ENCODE measurements at regions of chr22 and their contacts with region 1.

Region 1: GRCh38 chr22:29394931-29395581 is 6.7 kb upstream of the AP1B1 start:
- DNase-seq: peak; percentile 43 to 70 (median 64)
- ATAC-seq: peak; percentile 98
- H3K4me3 ChIP-seq: no peak overlapping the region
- H3K4me3 Mint-ChIP-seq: peak overlapping the region in 1 of 10 donors; percentile 23
- H3K27ac ChIP-seq: no peak overlapping the region
- H3K27ac Mint-ChIP-seq: peak overlapping the region in 2 of 9 donors; percentile 38 to 52
- H3K4me1 ChIP-seq: no peaks in the 10 kb centered on the region
- H3K4me1 Mint-ChIP-seq: peaks cover 7 to 19% (median 8%) of the 10 kb centered on the region in 7 donors
- H3K27me3 ChIP-seq: no peaks in the 10 kb centered on the region
- H3K27me3 Mint-ChIP-seq: no peaks in the 10 kb centered on the region

Region 2: DNA sequence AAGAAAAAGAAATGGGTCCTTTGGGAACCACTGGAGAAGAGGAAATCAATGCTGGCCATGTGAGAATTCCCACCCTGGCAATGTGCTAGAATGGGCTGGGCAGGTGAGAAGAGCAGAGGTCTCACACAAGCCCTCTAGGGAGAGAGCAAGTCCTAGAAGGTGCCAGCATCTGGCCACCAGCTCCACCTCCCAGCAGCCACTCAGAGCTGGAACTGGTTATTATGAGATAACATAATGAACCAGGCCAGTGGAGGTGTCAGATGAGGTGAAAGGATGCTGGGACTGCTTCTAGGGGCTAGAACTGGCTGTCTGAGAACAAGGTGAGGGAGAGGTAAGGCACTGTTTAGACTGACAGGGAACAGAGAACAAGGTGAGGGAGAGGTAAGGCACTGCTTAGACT is 114.2 kb after region 1 on chr22:
- CTCF ChIA-PET with region 1: no interaction called
- POLR2A ChIA-PET with region 1: no interaction called
- intact Hi-C with region 1: loop called in 1 of 2 experiments (anchors 5 kb)
- DNase-seq: no peak
- ATAC-seq: no peak
- H3K4me3 ChIP-seq: no peak overlapping the region
- H3K4me3 Mint-ChIP-seq: no peak overlapping the region
- H3K27ac ChIP-seq: no peak overlapping the region
- H3K27ac Mint-ChIP-seq: peak overlapping the region in 2 of 9 donors; percentile 66 to 84
- H3K4me1 ChIP-seq: no peaks in the 10 kb centered on the region
- H3K4me1 Mint-ChIP-seq: peaks cover 0 to 13% (median 0%) of the 10 kb centered on the region in 7 donors
- H3K27me3 ChIP-seq: no peaks in the 10 kb centered on the region
- H3K27me3 Mint-ChIP-seq: no peaks in the 10 kb centered on the region

Region 3: GRCh38 chr22:29524440-29525191 is 129.6 kb after region 1 on chr22:
- CTCF ChIA-PET with region 1: interaction called, 12 read pairs
- POLR2A ChIA-PET with region 1: no interaction called
- intact Hi-C with region 1: loop called (anchors 1 kb)
- DNase-seq: peak in 6 of 9 donors; percentile 2 to 25 (median 12)
- ATAC-seq: peak; percentile 64
- H3K4me3 ChIP-seq: no peak overlapping the region
- H3K4me3 Mint-ChIP-seq: no peak overlapping the region
- H3K27ac ChIP-seq: no peak overlapping the region
- H3K27ac Mint-ChIP-seq: peak overlapping the region in 1 of 9 donors; percentile 77
- H3K4me1 ChIP-seq: no peaks in the 10 kb centered on the region
- H3K4me1 Mint-ChIP-seq: no peaks in the 10 kb centered on the region
- H3K27me3 ChIP-seq: no peaks in the 10 kb centered on the region
- H3K27me3 Mint-ChIP-seq: no peaks in the 10 kb centered on the region

Region 4: GRCh38 chr22:29580200-29580810 is 185.2 kb after region 1 on chr22:
- CTCF ChIA-PET with region 1: no interaction called
- POLR2A ChIA-PET with region 1: no interaction called
- intact Hi-C with region 1: loop called (anchors 1 to 5 kb)
- DNase-seq: peak in 1 of 9 donors; percentile 26
- ATAC-seq: no peak
- H3K4me3 ChIP-seq: peak overlapping the region; percentile 75
- H3K4me3 Mint-ChIP-seq: peak overlapping the region; percentile 88 to 96 (median 93)
- H3K27ac ChIP-seq: peak overlapping the region; percentile 69
- H3K27ac Mint-ChIP-seq: peak overlapping the region; percentile 78 to 95 (median 91)
- H3K4me1 ChIP-seq: peaks cover 0 to 10% of the 10 kb centered on the region in 2 donors
- H3K4me1 Mint-ChIP-seq: peaks cover 11 to 20% (median 16%) of the 10 kb centered on the region in 7 donors
- H3K27me3 ChIP-seq: no peaks in the 10 kb centered on the region
- H3K27me3 Mint-ChIP-seq: no peaks in the 10 kb centered on the region

Measured in naive thymus-derived CD4-positive, alpha-beta T cell (primary cell).